Panc1 (cell line): ENCODE measurements at regions of chr1 and their contacts with region 1.

Region 1: GRCh38 chr1:33472349-33472980 is at the start of gene ZSCAN20:
- DNase-seq: peak; percentile 92
- ATAC-seq: peak; percentile 97
- H3K4me3 ChIP-seq: peak within 1 kb of the TSS; percentile 65 to 83
- H3K27ac ChIP-seq: peak within 1 kb of the TSS; percentile 87
- H3K4me1 ChIP-seq: no peaks in the 10 kb centered on the region
- H3K27me3 ChIP-seq: no peaks in the 10 kb centered on the region
- CTCF ChIP-seq: no peak
- total RNA-seq, gene ZSCAN20: 6.9 TPM

Region 2: DNA sequence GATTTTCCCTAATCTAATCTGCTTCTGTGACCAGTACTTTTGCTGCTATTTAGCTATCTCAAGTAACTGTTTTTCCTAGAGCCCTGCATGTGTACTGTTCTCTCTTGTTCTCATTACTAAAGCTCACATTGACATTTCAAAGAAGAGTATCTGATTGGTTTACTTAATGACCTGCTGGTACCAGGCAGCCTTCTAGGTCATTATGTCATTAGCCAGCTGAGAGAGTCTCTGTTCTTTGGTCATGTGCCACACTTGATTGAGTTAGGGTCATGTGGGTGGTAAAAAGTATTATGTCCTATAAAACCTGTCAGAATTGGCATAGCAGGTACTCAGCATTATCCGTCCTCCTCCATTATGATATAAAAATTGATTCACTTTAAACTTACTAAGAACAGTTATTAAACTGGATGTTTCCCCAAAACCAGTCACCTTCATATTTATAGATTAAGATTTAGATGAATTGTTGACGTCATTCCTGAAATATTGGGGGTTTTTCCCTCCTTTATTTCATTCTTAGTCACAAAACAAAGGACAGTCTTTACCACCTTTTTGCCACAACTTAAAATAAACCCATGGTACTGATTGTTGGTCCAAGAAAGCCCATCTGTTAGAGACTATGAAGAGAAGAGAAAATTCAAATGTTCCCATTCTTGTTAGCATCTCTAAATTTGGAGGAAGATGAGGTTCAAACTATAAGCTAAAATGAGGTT is 624.0 kb before region 1 on chr1:
- CTCF ChIA-PET with region 1: no interaction called
- POLR2A ChIA-PET with region 1: no interaction called
- in situ Hi-C with region 1: no loop called
- intact Hi-C with region 1: no loop called
- DNase-seq: no peak
- ATAC-seq: no peak
- H3K4me3 ChIP-seq: no peak overlapping the region
- H3K27ac ChIP-seq: no peak overlapping the region
- H3K4me1 ChIP-seq: no peaks in the 10 kb centered on the region
- H3K27me3 ChIP-seq: no peaks in the 10 kb centered on the region
- CTCF ChIP-seq: no peak

Region 3: DNA sequence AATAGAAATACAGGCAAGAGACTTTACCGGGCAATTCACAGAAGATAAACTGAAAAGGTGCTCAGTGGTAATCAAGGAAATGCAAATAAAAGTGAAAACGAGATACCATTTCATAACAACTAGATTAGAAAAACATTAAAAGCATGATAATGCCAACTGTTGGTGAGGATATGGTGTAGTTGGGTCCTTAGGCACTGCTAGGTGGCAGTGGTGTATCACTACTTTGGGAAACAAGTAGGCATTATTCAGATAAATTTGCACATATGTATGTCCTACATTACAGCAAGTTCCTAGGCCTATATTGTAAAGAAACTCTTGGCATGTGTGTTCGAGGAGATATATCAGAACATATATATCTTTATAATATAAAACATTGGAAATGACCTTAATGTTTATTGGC is 360.5 kb before region 1 on chr1:
- CTCF ChIA-PET with region 1: no interaction called
- POLR2A ChIA-PET with region 1: no interaction called
- in situ Hi-C with region 1: no loop called
- intact Hi-C with region 1: loop called (anchors 5 kb)
- DNase-seq: no peak
- ATAC-seq: peak; percentile 88
- H3K4me3 ChIP-seq: no peak overlapping the region
- H3K27ac ChIP-seq: no peak overlapping the region
- H3K4me1 ChIP-seq: no peaks in the 10 kb centered on the region
- H3K27me3 ChIP-seq: no peaks in the 10 kb centered on the region
- CTCF ChIP-seq: peak; percentile 67; the same call in 1 of the 2 replicates

Region 4: DNA sequence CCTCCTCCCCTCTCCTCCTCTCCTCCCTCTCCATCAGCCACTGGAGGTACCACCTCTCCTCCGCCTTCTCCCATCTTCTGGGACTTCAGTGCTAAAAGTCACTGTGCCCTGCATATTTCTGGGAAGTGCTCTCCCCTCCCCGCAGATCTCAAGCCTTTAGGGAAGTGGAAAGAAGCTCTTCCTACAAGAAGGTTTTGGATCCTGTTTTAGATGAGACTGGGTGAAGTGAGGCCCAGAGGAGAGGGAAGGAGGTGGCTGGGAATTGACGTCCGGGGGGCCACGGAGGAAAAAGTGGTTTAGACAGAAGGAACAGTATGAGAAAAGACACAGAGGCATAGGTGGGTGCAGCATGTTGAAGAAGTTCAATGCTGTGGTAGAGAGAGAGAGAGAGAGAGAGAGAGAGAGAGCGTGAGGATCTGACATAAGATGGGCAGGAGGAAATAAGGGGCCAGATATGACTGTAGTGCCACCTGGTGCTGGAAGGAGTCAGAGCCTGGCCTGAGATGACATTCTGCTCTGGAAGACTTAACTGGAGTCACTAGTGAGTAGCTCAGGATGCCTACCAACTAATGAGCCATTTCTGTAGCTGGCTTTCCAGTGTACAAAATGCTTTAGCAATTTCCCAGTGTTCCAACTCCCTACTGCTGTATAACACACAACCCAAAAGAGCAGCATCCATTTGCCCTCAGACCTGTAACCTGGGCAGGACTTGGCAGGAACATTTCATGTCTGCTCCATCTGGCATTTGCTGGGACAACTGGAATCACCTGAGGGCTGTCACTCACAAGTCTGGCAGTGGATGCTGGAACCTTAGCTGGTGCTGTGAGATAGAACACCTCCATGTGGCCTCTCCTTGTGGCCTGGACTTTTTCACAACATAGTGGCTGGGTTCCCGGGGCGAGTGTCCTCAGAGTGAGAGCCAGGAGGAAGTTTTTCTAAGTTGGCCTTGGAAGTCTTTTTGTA is 16.6 kb before region 1 on chr1:
- CTCF ChIA-PET with region 1: interaction called, 5 read pairs
- POLR2A ChIA-PET with region 1: interaction called, 12 read pairs
- in situ Hi-C with region 1: no loop called
- intact Hi-C with region 1: no loop called
- DNase-seq: peak; percentile 84
- ATAC-seq: peak; percentile 96
- H3K4me3 ChIP-seq: no peak overlapping the region
- H3K27ac ChIP-seq: no peak overlapping the region
- H3K4me1 ChIP-seq: no peaks in the 10 kb centered on the region
- H3K27me3 ChIP-seq: no peaks in the 10 kb centered on the region
- CTCF ChIP-seq: peak; percentile 88

Region 5: GRCh38 chr1:33616773-33617172 is 144.3 kb after region 1 on chr1:
- CTCF ChIA-PET with region 1: no interaction called
- POLR2A ChIA-PET with region 1: no interaction called
- in situ Hi-C with region 1: no loop called
- intact Hi-C with region 1: loop called (anchors 10 kb)
- DNase-seq: no peak
- ATAC-seq: no peak
- H3K4me3 ChIP-seq: no peak overlapping the region
- H3K27ac ChIP-seq: no peak overlapping the region
- H3K4me1 ChIP-seq: no peaks in the 10 kb centered on the region
- H3K27me3 ChIP-seq: peaks cover 36% of the 10 kb centered on the region
- CTCF ChIP-seq: no peak